ENCODE measurements at regions of chr19 and their contacts with region 1.

Region 1: DNA sequence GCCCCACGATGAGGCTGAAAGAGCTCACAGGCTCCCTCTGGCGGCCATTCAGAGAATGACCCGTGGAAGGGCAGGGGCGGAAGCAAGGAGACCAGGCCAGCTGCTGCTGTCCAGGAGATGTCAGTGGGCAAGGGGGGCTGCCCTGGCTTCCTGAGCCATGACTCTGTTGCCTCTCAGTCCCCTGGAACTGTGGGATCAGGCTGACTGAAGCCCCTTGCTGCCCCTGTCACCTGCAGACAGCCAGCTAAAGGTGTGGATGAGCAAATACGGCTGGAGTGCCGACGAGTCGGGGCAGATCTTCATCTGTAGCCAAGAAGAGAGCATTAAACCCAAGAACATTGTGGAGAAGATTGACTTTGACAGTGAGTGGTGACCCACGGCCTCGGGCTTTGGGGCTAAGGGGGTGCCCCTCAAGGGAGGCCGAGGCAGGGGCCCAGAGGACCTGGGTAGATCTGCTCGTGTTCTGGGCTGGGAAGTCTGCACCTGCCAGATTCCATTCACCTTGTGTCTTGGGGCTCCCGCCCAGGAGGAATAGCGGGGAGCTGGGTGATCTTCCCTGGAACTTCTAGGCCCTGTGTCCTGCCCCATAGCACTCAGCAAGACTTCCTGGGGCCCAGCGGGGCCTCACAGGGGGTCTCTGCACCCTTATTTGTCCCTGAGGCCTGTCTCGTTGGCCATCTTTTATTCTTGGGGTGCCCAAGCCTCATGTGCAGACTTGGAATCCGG is 12.5 kb upstream of the ACTN4 start:
- DNase-seq: peak; percentile 74
- H3K4me3 ChIP-seq: no peak overlapping the region
- H3K27ac ChIP-seq: no peak overlapping the region
- H3K4me1 ChIP-seq: no peaks in the 10 kb centered on the region
- H3K27me3 ChIP-seq: no peaks in the 10 kb centered on the region
- CTCF ChIP-seq: peak; percentile 89

Region 2: GRCh38 chr19:38402967-38403861 is 231.7 kb before region 1 on chr19 and contains the start of gene FAM98C:
- CTCF ChIA-PET with region 1: interaction called, 11 read pairs
- POLR2A ChIA-PET with region 1: no interaction called
- intact Hi-C with region 1: loop called (anchors 2 kb)
- DNase-seq: peak; percentile 98
- H3K4me3 ChIP-seq: peak within 1 kb of the TSS; percentile 87
- H3K27ac ChIP-seq: peak within 1 kb of the TSS; percentile 70
- H3K4me1 ChIP-seq: no peaks in the 10 kb centered on the region
- H3K27me3 ChIP-seq: no peaks in the 10 kb centered on the region
- CTCF ChIP-seq: peak; percentile 93
- total RNA-seq, gene FAM98C: 11.8 and 12.1 TPM in 2 replicates

Region 3: GRCh38 chr19:38496603-38497487 is 138.1 kb before region 1 on chr19:
- CTCF ChIA-PET with region 1: no interaction called
- POLR2A ChIA-PET with region 1: no interaction called
- intact Hi-C with region 1: no loop called
- DNase-seq: peak; percentile 50
- H3K4me3 ChIP-seq: no peak overlapping the region
- H3K27ac ChIP-seq: no peak overlapping the region
- H3K4me1 ChIP-seq: no peaks in the 10 kb centered on the region
- H3K27me3 ChIP-seq: no peaks in the 10 kb centered on the region
- CTCF ChIP-seq: no peak

Region 4: DNA sequence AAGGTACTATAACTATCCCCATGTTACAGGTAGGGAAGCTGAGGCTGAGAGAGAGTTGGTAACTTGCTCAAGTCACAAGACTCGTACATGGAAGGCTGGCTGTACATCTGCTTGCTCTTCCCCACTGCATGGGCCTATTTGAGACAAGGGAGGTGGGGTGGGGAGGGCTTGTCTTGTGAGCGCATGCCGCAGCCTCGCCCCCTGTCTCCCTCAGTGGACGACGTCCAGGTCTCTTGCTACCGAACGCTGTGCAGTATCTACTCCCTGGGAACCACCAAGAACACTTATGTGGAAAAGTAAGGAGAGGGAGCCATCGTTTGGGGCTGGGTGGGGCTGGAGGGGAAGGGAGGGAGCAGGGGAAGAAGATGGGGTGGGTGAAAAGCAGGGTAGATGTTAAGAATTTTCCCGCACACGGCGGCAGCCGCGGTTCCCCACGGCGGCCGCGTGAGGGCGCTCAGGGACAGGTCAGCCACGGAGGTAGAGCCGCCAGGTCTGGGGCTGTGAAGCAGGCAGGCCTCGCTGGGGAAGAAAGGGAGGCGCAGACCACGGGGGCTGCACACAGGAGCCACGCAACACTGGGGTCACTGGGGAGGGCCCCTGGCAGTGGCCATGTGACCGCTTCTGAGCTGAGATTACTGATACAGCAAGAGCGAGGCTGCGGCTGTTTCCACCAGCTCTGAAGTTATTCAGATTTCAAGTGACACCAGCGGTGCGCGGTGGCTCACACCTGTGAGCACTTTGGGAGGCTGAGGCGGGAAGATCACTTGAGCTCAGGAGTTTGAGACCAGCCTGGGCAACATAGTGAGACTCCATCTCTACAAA is 119.9 kb before region 1 on chr19:
- CTCF ChIA-PET with region 1: interaction called, 3 read pairs
- POLR2A ChIA-PET with region 1: no interaction called
- intact Hi-C with region 1: loop called (anchors 10 kb)
- DNase-seq: peak; percentile 68
- H3K4me3 ChIP-seq: no peak overlapping the region
- H3K27ac ChIP-seq: no peak overlapping the region
- H3K4me1 ChIP-seq: no peaks in the 10 kb centered on the region
- H3K27me3 ChIP-seq: no peaks in the 10 kb centered on the region
- CTCF ChIP-seq: peak; percentile 92

Region 5: DNA sequence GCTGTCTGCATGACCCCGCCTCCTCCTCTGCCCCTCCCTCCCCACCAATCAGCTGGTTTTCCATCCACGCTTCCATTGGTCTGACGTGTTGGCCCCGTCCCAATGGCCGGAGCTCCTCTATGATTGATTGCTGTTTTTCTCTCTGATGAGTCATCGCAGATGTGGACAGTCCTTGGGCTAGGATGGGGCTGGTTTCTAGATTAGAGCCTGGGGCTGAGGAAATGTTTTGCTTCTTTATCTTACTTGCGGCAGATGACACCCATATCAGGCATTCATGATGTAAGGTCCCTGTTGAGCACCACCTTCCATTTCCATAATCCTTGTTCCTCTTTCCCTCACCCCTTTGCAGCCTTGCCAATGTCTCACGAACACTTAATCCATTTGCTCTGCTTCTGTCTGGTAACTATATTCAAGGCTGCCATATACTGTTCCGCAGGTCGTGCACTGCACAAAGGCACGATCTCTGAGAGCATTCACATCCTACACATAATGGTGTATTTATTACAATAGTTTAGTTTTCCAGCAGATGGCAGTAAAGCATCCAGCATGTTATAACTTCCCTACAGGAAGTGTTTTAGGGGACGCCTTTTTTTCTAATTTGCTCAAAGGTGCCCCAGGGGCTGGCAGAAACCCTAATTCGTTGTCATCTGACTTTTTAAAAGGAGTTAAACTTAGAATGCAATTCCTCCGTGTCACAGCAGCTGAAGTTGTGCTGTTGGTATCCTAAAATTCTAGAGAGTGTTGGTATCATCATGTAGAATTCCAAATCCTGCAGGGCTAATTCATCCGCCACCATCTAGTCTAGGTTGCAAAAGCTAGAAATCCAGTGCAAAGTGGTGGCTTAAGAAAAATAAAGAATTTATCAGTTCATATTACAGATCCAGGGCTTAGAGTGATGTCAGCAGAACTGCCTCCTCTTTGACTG is 90.6 kb before region 1 on chr19:
- CTCF ChIA-PET with region 1: interaction called, 11 read pairs
- POLR2A ChIA-PET with region 1: no interaction called
- intact Hi-C with region 1: loop called (anchors 1 kb)
- DNase-seq: peak; percentile 91
- H3K4me3 ChIP-seq: peak overlapping the region; percentile 39
- H3K27ac ChIP-seq: peak overlapping the region; percentile 55
- H3K4me1 ChIP-seq: peaks cover 7% of the 10 kb centered on the region
- H3K27me3 ChIP-seq: no peaks in the 10 kb centered on the region
- CTCF ChIP-seq: peak; percentile 69

Region 6: GRCh38 chr19:38647368-38647965 is 12.5 kb after region 1 on chr19 and contains the start of gene ACTN4:
- CTCF ChIA-PET with region 1: interaction called, 14 read pairs
- POLR2A ChIA-PET with region 1: no interaction called
- intact Hi-C with region 1: no loop called
- DNase-seq: peak; percentile 98
- H3K4me3 ChIP-seq: peak within 1 kb of the TSS; percentile 100
- H3K27ac ChIP-seq: peak within 1 kb of the TSS; percentile 93
- H3K4me1 ChIP-seq: peaks cover 27% of the 10 kb centered on the region
- H3K27me3 ChIP-seq: no peaks in the 10 kb centered on the region
- CTCF ChIP-seq: no peak
- total RNA-seq, gene ACTN4: 370 and 397 TPM in 2 replicates

Region 7: DNA sequence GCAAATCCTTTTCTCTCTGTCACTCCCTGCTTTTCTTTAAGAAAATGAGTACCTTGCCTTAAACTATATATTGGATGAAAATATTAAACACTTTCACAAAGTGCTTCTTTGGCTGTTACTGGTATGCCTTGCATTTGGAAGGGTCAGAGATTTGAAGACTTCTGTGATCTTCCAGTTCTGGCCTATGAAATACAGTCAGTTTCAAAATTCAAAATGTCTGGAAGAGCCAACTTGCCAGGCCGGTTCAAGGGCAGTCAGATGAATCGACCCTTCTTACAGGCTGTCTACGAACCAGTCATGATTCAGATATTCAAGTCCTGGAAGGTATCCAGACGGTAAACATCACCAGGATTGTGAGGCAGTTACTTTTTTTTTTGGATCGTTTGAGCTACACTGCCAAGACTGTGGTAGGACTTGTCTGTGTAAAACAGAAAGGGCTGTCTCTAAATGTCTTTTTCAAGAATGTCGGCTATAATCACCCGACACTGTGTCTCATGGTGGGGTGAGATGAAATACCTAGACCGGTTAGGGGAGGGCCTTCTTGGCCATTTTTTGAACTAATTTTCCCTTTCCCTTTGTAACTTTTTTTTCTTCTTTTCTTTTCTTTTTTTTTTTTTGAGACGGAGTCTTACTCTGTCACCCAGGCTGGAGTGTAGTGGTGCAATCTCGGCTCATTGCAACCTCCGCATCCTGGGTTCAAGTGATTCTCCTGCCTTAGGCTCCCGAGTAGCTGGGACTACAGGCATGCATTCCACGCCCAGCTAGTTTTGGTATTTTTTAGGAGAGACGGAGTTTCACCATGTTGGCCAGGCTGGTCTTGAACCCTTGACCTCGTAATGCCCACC is 23.8 kb after region 1 on chr19:
- CTCF ChIA-PET with region 1: no interaction called
- POLR2A ChIA-PET with region 1: no interaction called
- intact Hi-C with region 1: no loop called
- DNase-seq: peak; percentile 70
- H3K4me3 ChIP-seq: no peak overlapping the region
- H3K27ac ChIP-seq: peak overlapping the region; percentile 70
- H3K4me1 ChIP-seq: peaks cover 70% of the 10 kb centered on the region
- H3K27me3 ChIP-seq: no peaks in the 10 kb centered on the region
- CTCF ChIP-seq: no peak